AG04450 (cell line): ENCODE measurements at regions of chr1 and their contacts with region 1.

Region 1: GRCh38 chr1:229091721-229092136 is 179.2 kb upstream of the RAB4A start:
- DNase-seq: no peak
- H3K4me3 ChIP-seq: no peak overlapping the region
- H3K27ac ChIP-seq: no peak overlapping the region
- H3K27me3 ChIP-seq: peaks cover 3% of the 10 kb centered on the region
- CTCF ChIP-seq: no peak

Region 2: DNA sequence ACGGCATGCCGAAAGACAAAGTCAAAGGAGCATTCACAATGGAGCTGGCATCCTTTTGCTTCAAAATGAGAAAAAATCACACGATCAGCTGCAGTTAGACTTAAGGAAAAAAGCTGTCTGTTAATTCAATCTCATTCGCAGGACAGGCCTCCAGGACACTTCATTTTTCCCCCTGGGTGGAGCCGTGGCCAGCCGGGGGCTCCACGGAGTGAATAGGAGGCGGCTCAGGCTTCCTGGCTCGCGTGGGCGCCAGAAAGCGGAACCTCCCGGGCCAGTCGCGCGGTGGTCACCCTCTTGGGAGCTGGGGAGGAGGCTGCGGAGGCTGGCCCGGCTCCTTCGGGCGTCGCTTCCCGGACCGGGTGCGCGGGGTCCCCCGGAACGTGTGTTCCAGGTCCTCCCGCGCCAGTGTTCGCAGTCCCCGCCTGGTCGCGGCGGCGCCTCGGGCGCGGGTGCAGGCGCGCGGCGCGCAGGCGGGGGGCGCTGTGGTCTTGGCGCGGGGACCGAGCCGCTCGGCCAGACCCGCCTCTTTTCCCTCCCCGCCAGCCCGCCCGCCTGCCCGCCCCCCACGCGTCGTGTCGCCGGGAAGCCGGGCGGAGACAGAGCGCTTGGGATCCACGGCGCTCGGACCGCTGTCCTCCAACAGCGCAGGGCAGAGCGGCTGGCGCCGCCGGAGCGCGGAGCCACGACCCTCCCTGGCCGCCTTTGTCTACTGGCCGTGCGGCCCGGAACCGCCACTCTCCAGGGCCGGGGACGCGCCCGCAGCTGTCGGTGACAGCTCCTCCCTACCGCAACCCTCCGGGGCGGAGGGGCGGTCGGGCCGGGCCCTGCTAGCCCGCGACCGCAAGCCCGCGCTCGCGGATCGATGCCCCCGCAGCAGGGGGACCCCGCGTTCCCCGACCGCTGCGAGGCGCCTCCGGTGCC is 356.6 kb before region 1 on chr1 and contains the start of gene RHOU:
- CTCF ChIA-PET with region 1: no interaction called
- POLR2A ChIA-PET with region 1: interaction called, 10 read pairs
- DNase-seq: no peak
- H3K4me3 ChIP-seq: peak within 1 kb of the TSS; percentile 63
- H3K27ac ChIP-seq: no peak within 1 kb of the TSS
- H3K27me3 ChIP-seq: peaks cover 37% of the 10 kb centered on the region
- CTCF ChIP-seq: peak; percentile 39; the same call in 1 of the 2 replicates
- polyA plus RNA-seq, gene RHOU: 1.4 and 1.6 TPM in 2 replicates